ENCODE measurements at regions of chr7 and their contacts with region 1.

Region 1: GRCh38 chr7:23570592-23571200 is 26.5 kb upstream of the CCDC126 start:
- DNase-seq: peak; percentile 70 to 74 (median 71)
- ATAC-seq: peak; percentile 99 to 100 (median 100)
- H3K4me3 ChIP-seq: no peak overlapping the region
- H3K27ac ChIP-seq: no peak overlapping the region
- H3K4me1 ChIP-seq: no peaks in the 10 kb centered on the region
- H3K27me3 ChIP-seq: no peaks in the 10 kb centered on the region
- CTCF ChIP-seq: peak; percentile 85 to 97 (median 90)
- POLR2A ChIP-seq: no peak

Region 2: GRCh38 chr7:23520582-23520981 is 50.1 kb before region 1 on chr7:
- intact Hi-C with region 1: no loop called
- DNase-seq: no peak
- ATAC-seq: no peak
- H3K4me3 ChIP-seq: no peak overlapping the region
- H3K27ac ChIP-seq: no peak overlapping the region
- H3K4me1 ChIP-seq: peaks cover 0 to 15% (median 0%) of the 10 kb centered on the region in 4 donors
- H3K27me3 ChIP-seq: no peaks in the 10 kb centered on the region
- CTCF ChIP-seq: no peak
- POLR2A ChIP-seq: no peak

Region 3: GRCh38 chr7:23700059-23700458 is 129.4 kb after region 1 on chr7:
- intact Hi-C with region 1: loop called (anchors 10 kb)
- DNase-seq: no peak
- ATAC-seq: no peak
- H3K4me3 ChIP-seq: no peak overlapping the region
- H3K27ac ChIP-seq: no peak overlapping the region
- H3K4me1 ChIP-seq: no peaks in the 10 kb centered on the region
- H3K27me3 ChIP-seq: no peaks in the 10 kb centered on the region
- CTCF ChIP-seq: no peak
- POLR2A ChIP-seq: no peak

Measured in right lobe of liver (tissue), 6 donors.